MCF 10A (cell line): ENCODE measurements at regions of chr6 and their contacts with region 1.

Region 1: DNA sequence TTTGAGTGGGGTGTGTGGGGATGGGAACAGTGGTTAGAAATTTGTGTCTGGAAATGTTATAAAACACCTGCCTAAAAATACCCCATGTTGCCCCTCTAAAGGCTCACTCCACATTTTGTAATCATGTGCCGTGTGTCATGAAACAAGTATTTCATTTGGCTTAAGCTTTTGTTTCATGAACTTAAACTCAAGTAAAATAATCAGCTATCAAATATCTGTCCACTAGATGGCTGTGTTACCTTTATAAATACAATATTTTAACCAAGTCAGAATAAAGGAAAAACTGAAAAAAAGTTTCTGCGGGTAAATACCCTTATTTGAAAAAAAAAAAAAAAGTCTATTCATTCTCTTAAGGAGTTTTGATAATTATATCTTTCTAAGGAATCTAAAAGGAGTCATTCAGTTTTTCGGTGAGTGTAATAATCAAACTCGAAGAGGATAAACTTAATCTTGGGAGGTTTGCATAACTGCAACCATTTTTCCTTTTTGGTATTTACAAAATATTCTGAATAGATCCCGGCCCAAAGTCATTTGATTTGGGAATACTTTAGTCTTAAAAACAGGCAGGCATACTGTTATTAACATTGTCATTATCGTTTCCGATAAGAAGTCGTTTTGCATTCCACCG is 29.9 kb upstream of the MTRF1L start:
- DNase-seq: peak; percentile 46
- H3K4me3 Mint-ChIP-seq: no peak overlapping the region
- H3K27ac Mint-ChIP-seq: no peak overlapping the region
- H3K4me1 Mint-ChIP-seq: peaks cover 20% of the 10 kb centered on the region
- H3K27me3 Mint-ChIP-seq: no peaks in the 10 kb centered on the region
- CTCF ChIP-seq: peak; percentile 43

Region 2: GRCh38 chr6:153108315-153108714 is 75.9 kb after region 1 on chr6:
- CTCF ChIA-PET with region 1: interaction called, 36 read pairs
- POLR2A ChIA-PET with region 1: interaction called, 3 read pairs
- intact Hi-C with region 1: loop called (anchors 1 kb)
- DNase-seq: peak; percentile 57
- H3K4me3 Mint-ChIP-seq: no peak overlapping the region
- H3K27ac Mint-ChIP-seq: no peak overlapping the region
- H3K4me1 Mint-ChIP-seq: peaks cover 16% of the 10 kb centered on the region
- H3K27me3 Mint-ChIP-seq: no peaks in the 10 kb centered on the region
- CTCF ChIP-seq: peak; percentile 30

Region 3: DNA sequence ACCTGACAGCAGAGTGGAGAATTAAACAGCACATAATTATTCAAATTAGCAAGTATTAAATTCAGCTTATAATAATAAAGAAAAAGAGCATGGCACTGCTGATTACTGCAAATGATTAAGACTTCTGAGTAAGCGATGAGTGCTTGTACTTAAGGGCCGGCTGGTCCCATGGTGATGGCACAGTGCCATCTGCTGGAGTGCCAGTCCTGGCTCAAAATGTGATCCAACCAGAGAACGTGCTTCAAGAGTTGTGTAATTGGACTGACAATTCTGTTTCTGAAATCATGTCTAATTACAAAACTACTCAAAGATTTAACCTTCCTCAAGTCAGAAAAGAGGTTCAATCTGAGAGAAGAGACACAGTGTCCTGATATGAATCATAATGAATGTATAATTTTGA is 280.3 kb after region 1 on chr6:
- CTCF ChIA-PET with region 1: interaction called, 3 read pairs
- POLR2A ChIA-PET with region 1: interaction called, 4 read pairs
- intact Hi-C with region 1: loop called (anchors 1 kb)
- DNase-seq: peak; percentile 87
- H3K4me3 Mint-ChIP-seq: no peak overlapping the region
- H3K27ac Mint-ChIP-seq: no peak overlapping the region
- H3K4me1 Mint-ChIP-seq: no peaks in the 10 kb centered on the region
- H3K27me3 Mint-ChIP-seq: no peaks in the 10 kb centered on the region
- CTCF ChIP-seq: peak; percentile 28

Region 4: DNA sequence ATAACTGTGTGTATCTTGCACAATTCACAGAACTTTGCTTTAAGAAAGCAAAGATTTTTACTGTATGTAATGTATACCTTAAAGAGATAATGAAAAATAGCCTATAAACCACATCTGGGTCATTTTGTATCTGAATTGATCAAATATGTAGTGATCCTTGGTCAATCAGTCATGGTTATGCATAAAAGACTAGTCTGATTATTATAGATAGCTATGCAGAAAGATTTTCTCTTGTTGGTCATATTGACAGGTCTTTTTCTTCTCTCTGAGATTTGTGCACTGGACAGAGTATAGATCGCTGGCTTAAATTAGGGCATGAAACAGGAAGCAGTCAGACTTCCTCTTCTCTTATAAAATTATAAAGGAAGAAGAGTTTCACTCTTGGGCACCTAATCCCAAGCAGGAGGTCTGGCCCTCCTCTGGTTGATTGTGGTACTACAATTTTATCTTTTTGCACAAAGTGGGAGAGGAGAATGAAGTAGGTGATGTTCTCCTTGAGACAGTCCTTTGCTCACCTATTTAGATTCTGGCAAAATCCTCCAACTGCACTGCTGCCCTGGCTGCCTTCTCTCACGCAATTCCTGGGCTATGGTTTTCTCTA is 479.6 kb after region 1 on chr6:
- CTCF ChIA-PET with region 1: interaction called, 4 read pairs
- POLR2A ChIA-PET with region 1: no interaction called
- intact Hi-C with region 1: loop called (anchors 1 kb)
- DNase-seq: peak; percentile 67
- H3K4me3 Mint-ChIP-seq: no peak overlapping the region
- H3K27ac Mint-ChIP-seq: peak overlapping the region; percentile 35
- H3K4me1 Mint-ChIP-seq: no peaks in the 10 kb centered on the region
- H3K27me3 Mint-ChIP-seq: no peaks in the 10 kb centered on the region
- CTCF ChIP-seq: peak; percentile 62